OCI-LY7 (cell line): ENCODE measurements at regions of chr4 and their contacts with region 1.

Region 1: DNA sequence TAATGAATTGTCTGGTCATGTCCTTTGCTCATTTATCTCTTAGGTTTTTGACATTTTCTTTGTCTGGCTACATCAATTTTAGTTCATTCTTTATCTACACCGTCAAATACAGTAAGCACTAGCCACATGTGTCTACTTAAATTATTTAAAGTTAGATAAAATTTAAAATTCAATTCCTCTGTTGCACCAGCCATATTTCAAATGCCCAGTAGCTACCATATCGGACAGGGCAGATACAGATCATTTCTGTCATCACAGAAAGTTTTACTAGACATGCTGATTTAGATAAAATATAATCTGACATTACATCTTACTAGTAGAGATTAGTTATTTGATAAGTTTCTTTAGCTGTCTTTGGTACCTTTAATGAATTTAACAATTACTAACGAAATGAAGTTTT is 61.1 kb downstream of the WDR19 start:
- DNase-seq: no peak
- H3K4me3 ChIP-seq: no peak overlapping the region
- H3K27ac ChIP-seq: no peak overlapping the region
- H3K4me1 ChIP-seq: no peaks in the 10 kb centered on the region
- CTCF ChIP-seq: no peak

Region 2: GRCh38 chr4:38815885-38816782 is 427.3 kb before region 1 on chr4:
- CTCF ChIA-PET with region 1: no interaction called
- POLR2A ChIA-PET with region 1: no interaction called
- intact Hi-C with region 1: no loop called
- DNase-seq: peak; percentile 65
- H3K4me3 ChIP-seq: peak overlapping the region; percentile 51
- H3K27ac ChIP-seq: peak overlapping the region; percentile 49
- H3K4me1 ChIP-seq: peaks cover 19% of the 10 kb centered on the region
- CTCF ChIP-seq: no peak

Region 3: DNA sequence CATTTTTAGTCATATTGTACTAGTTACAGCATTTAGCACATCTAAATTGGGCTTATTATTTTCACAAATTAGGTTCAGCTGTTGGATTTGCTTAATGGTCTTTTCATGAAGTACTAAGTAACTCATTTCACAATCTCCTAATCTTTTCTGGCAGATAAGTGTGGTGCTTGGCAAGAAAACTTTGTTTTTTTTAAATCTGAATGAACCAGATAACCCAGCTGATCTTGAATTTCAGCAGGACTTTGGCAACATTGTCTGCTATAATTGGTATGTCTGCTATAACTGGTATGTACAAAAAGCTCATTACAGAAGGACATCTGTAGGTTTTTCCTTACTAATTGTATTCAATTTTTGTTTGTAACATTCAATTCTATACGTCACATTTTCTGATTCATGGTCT is 38.5 kb before region 1 on chr4:
- CTCF ChIA-PET with region 1: no interaction called
- POLR2A ChIA-PET with region 1: no interaction called
- intact Hi-C with region 1: loop called (anchors 5 kb)
- DNase-seq: no peak
- H3K4me3 ChIP-seq: no peak overlapping the region
- H3K27ac ChIP-seq: no peak overlapping the region
- H3K4me1 ChIP-seq: no peaks in the 10 kb centered on the region
- CTCF ChIP-seq: no peak